Mammary epithelial cell (primary cell): ENCODE measurements at regions of chr17 and their contacts with region 1.

Region 1: GRCh38 chr17:65137021-65137991 is at the start of gene RGS9:
- DNase-seq: peak; percentile 65
- H3K4me3 ChIP-seq: peak within 1 kb of the TSS; percentile 38 to 49 (median 40)
- H3K27ac ChIP-seq: no peak within 1 kb of the TSS
- H3K4me1 ChIP-seq: peaks cover 4% of the 10 kb centered on the region
- H3K27me3 ChIP-seq: no peaks in the 10 kb centered on the region
- CTCF ChIP-seq: peak; percentile 58 to 93
- total RNA-seq, gene RGS9: 2.8 to 3.5 TPM

Region 2: DNA sequence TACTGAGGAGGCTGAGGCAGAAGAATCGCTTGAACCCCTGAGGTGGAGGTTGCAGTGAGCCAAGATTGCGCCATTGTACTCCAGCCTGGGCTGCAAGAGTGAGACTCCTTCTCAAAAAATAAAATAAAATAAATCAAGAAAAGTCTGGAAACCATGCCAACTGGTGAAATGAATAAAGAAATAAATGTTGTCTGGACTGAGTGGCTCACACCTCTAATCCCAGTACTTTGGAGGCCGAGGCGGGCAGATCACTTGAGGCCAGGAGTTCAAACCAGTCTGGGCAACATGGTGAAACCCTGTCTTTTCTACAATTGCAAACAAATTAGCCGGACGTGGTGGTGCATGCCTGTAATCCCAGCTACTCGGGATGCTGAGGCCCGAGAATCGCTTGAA is 217.3 kb before region 1 on chr17:
- CTCF ChIA-PET with region 1: no interaction called
- dilution Hi-C with region 1: no loop called
- in situ Hi-C with region 1: no loop called
- intact Hi-C with region 1: loop called (anchors 5 kb)
- DNase-seq: no peak
- H3K4me3 ChIP-seq: peak overlapping the region in 2 of 3 experiments; percentile 43 to 72
- H3K27ac ChIP-seq: no peak overlapping the region
- H3K4me1 ChIP-seq: peaks cover 8% of the 10 kb centered on the region
- H3K27me3 ChIP-seq: no peaks in the 10 kb centered on the region
- CTCF ChIP-seq: no peak

Region 3: DNA sequence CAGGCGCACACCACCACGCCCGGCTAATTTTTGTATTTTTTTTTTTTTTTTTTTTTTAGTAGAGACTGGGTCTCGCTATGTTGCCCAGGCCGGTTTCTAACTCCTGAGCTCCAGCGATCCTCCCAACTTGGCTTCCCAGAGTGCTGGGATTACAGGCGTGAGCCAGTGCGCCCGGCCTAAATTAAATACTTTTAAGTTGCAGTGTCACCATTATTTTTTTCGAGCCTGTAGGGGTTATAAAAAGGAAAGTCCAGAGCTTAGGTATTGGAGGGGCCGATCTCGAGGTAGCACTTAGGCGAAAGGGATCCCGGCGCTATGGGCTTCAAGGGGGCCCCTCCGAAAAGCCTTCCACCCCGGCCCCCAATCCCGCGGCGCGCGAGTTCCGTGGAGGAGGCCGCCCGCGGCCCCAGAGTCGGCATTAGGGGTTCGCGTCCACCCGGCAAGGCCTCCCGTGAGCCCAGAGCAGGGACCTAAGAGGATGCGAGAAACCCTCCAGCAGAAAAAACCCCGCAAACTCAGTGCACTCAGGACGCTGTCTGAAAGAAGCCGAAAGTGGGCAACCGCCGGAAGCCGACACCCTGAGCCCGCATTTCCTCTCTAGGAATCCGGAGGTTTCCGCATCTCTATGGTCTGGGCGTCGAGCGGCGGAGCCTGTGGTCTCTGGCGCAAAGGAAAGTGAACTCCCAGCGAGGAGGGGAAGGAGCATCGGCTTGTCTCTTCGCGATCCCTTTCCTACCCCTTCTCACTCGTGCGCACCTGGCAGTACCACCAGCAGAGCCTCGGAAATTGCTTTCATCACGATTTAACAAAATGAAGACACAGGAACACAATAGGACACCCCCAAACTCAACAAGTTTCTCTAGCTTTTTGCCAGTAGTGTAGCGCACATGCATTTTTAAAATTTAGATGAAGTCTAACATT is 14.2 kb before region 1 on chr17:
- CTCF ChIA-PET with region 1: no interaction called
- dilution Hi-C with region 1: no loop called
- in situ Hi-C with region 1: no loop called
- intact Hi-C with region 1: loop called (anchors 1 kb)
- DNase-seq: peak; percentile 81
- H3K4me3 ChIP-seq: peak overlapping the region; percentile 50 to 70 (median 65)
- H3K27ac ChIP-seq: peak overlapping the region; percentile 65
- H3K4me1 ChIP-seq: peaks cover 12% of the 10 kb centered on the region
- H3K27me3 ChIP-seq: no peaks in the 10 kb centered on the region
- CTCF ChIP-seq: no peak